Activated T-helper 1 cell treated with anti-CD3 and anti-CD28 coated beads, Interleukin-12 subunit alpha, Interleukin-12 subunit beta, Interleukin-2, Interleukin-4 antibody, amounts not matched to agents 30 ng/mL and 10 ng/mL and 1 ng/mL, durations not matched to agents 14 hours and 24 hours and 36 hours (primary cell): ENCODE measurements at regions of chr17 and their contacts with region 1.

Region 1: DNA sequence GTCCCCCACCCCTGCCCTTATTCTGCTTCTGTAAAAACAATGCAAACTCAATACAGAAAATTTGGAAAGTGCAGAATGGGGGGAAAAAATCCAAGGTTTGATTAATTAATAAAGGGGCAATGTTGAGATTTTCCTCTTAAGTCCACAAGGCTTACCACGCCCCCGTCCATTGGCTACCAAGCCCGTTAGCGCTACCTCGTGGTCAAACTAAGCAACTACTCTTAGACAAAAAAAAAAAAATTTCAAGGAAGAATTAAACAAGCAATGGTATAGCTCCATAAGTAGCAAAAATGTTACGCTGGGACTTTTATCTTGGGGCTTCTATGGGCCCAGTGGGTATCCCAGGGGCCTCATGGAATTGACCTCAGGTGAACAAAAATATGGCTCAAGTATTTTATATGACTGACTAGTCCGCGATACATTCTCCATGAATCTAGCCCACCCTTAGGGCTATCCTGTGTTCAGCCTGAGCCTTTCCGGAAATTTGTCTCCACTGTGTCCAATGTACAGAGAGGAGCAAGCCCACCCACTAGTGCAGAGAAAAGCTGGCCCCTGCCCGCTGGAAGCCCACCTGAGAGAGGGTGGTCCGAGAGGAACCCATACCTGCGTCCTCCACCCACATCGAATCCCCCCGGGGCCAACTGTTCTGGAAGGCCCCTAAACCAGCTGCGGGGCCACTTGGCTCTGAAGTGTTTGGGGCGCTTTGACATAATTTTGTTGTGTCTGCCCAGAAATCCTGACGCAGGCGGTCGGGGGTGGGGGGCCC is 19.1 kb upstream of the TEX2 start:
- DNase-seq: peak; percentile 28
- H3K4me3 Mint-ChIP-seq: no peak overlapping the region
- H3K27ac Mint-ChIP-seq: no peak overlapping the region
- H3K4me1 Mint-ChIP-seq: peaks cover 7% of the 10 kb centered on the region
- H3K27me3 Mint-ChIP-seq: no peaks in the 10 kb centered on the region

Region 2: GRCh38 chr17:63919311-63919723 is 362.8 kb before region 1 on chr17:
- intact Hi-C with region 1: loop called (anchors 5 kb)
- DNase-seq: peak; percentile 65
- H3K4me3 Mint-ChIP-seq: no peak overlapping the region
- H3K27ac Mint-ChIP-seq: no peak overlapping the region
- H3K4me1 Mint-ChIP-seq: peaks cover 7% of the 10 kb centered on the region
- H3K27me3 Mint-ChIP-seq: peaks cover 8% of the 10 kb centered on the region

Region 3: DNA sequence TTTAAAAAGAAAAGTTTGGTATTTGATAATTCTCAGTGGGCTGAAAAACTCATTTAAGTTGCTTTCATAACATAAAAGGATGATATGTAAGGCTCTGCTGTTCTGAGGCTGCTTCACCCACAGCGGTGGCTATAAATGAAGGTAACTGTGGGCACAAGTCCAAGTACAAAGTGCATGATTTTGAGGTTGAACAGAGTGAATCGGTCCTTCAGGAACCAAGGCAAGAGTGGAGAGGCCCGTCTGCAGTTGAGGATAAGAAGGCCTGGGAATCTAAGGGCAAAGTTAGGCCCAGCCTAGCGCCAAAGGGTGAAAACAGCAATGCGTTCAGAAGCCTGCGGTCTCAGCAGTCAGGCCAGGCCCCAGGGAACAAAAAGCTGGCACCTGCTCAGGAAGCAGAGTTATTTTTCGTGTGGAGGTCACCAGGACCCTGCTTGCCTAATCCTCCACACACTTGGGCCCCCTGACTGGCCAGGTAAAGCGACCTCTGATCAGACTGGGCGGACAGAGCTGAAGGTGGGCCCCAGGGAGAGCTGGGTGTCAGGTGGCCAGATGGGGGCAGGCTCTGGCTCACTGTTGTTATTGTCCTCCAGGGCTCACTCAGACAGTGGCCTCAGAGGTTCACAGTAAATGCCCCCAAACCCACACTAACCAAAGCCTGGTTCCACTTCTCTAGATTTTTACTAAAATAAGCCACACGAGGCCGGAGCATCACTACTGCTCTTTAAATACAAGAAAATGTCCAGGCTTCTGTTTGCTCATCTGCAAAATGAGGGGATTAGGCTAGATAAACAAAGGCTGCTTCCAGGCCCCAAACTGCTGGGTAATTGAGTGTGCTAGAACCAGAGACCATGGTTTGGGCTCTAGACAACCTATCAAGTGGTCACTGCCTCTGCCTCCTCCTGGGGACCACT is 65.6 kb before region 1 on chr17:
- intact Hi-C with region 1: loop called (anchors 5 kb)
- DNase-seq: no peak
- H3K4me3 Mint-ChIP-seq: no peak overlapping the region
- H3K27ac Mint-ChIP-seq: no peak overlapping the region
- H3K4me1 Mint-ChIP-seq: peaks cover 16% of the 10 kb centered on the region
- H3K27me3 Mint-ChIP-seq: peaks cover 2% of the 10 kb centered on the region

Region 4: DNA sequence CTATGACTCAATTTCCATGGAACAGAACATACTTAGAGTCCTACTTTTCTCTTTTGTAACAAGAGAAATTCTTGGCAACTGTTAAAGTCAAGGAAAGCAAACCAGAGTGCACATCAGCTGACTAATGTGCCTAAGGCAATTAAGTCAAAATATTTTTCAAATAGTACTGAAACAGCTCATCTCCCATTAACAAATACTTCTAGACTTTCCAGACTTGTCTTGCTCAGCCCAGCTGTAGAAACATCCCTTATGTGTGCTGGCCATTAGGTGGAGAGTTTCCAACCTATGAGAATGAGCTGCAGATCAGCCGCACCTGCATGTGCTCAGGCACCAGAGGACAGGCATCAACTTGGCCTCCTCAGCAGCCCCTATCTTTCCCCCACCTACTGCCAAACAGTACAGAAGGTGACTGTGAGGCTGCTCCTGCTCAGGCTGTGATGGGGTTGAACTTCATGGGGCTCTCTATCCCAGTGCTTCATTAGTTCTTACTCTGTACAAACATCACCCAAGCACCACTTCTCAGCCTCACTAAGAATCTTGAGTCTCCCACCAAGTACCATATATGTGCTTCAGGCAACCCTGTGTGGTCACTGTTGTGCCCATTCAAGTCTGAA is 51.2 kb before region 1 on chr17:
- intact Hi-C with region 1: no loop called
- DNase-seq: no peak
- H3K4me3 Mint-ChIP-seq: no peak overlapping the region
- H3K27ac Mint-ChIP-seq: no peak overlapping the region
- H3K4me1 Mint-ChIP-seq: no peaks in the 10 kb centered on the region
- H3K27me3 Mint-ChIP-seq: no peaks in the 10 kb centered on the region